ENCODE measurements at regions of chr2 and their contacts with region 1.

Region 1: DNA sequence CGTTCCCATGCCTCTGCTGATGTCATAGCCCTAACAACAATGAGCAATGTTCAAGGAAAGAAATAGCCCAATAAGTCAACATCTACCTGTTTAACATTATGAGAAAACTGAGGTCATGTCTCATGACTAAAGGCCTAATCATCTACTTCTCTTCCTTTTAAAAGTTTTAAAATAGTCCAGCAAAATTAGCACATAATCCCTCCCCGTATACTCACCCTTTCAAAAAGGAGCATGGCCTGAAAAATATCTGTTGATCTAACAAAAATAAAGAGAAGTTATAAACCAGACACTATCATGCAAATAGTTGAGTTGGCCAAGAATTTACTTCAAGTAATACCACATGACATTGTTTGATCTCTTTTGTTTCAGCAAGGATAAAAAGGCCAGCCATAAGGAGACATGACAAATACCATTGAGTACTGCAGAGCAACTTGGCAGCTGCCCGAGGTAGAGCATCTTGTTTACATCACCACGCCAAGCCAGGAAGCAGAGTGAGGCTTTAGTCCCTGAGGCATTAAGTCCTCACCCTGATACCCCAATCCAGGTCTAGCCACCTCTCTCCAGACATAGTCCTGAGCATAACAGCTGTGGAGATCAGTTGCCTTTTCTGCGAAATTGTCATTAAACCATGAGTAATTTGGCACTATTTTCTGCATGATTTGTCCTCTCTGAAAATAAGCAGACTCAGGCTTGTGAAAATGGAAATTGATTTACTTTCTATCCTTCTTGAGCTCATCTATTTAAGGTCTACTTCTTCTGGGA is 137.4 kb upstream of the ETAA1 start:
- DNase-seq: peak; percentile 19 to 53 (median 35)
- H3K4me3 ChIP-seq: no peak overlapping the region
- H3K27ac ChIP-seq: peak overlapping the region in 1 of 2 donors; percentile 64
- H3K4me1 ChIP-seq: peaks cover 3% of the 10 kb centered on the region
- H3K27me3 ChIP-seq: no peaks in the 10 kb centered on the region
- CTCF ChIP-seq: no peak
- EP300 ChIP-seq: no peak
- POLR2A ChIP-seq: no peak

Region 2: DNA sequence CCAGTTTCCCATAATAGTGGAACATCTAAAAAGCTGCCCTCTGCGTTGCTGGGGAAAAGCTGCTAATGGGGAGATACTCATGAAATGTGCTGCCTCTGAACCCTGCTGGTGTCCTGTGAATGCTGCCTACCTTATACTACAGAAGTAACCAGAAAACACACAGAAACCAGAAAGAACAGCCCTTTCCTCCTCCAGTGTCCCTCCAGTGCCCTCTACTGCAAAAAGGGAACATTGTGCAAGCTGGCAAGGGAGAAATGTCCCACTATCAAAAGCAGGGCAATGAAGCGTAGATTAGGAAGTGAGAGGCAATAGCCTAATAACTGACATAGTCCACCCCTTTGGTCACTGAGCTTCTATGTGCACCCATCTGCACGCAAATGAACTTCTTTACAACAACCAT is 25.3 kb before region 1 on chr2:
- intact Hi-C with region 1: no loop called
- DNase-seq: peak in 1 of 5 donors; percentile 9
- H3K4me3 ChIP-seq: no peak overlapping the region
- H3K27ac ChIP-seq: no peak overlapping the region
- H3K4me1 ChIP-seq: peaks cover 3% of the 10 kb centered on the region
- H3K27me3 ChIP-seq: no peaks in the 10 kb centered on the region
- CTCF ChIP-seq: no peak
- EP300 ChIP-seq: no peak
- POLR2A ChIP-seq: no peak

Region 3: GRCh38 chr2:67397143-67397986 is 137.6 kb after region 1 on chr2 and contains the start of gene ETAA1:
- intact Hi-C with region 1: loop called in 1 of 4 experiments (anchors 5 kb)
- DNase-seq: peak; percentile 91 to 96 (median 93)
- H3K4me3 ChIP-seq: peak within 1 kb of the TSS; percentile 80
- H3K27ac ChIP-seq: peak within 1 kb of the TSS; percentile 93
- H3K4me1 ChIP-seq: peaks cover 2% of the 10 kb centered on the region
- H3K27me3 ChIP-seq: no peaks in the 10 kb centered on the region
- CTCF ChIP-seq: no peak
- EP300 ChIP-seq: no peak
- POLR2A ChIP-seq: peak; percentile 80
- total RNA-seq, gene ETAA1: 10.4 to 22.7 (median 14.1) TPM